ENCODE measurements at regions of chrX and their contacts with region 1.

Region 1: GRCh38 chrX:19360903-19361302 is 17.2 kb downstream of the PDHA1 start:
- DNase-seq: no peak
- ATAC-seq: no peak
- H3K4me3 Mint-ChIP-seq: no peak overlapping the region
- H3K27ac Mint-ChIP-seq: no peak overlapping the region
- H3K4me1 Mint-ChIP-seq: no peaks in the 10 kb centered on the region
- H3K27me3 Mint-ChIP-seq: no peaks in the 10 kb centered on the region

Region 2: DNA sequence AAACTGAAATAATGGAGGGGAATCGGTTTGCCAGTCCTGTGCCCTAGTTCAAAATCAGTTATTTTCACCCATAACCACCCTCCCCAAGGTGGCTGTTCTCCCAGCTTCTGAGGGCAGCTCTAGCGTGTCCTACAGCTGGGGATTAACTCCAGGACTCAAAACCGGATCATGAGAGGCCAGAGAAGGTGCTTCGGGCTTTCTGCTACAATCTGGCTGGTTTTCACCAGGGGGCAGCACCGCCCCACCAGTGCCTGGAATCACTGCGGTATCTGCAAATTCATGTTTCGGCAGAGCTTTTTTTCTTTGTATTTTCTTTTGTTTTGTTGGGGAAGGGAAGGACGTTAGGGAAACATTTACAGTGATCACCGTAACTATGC is 11.3 kb after region 1 on chrX:
- CTCF ChIA-PET with region 1: interaction called, 13 read pairs
- POLR2A ChIA-PET with region 1: no interaction called
- DNase-seq: peak; percentile 76
- ATAC-seq: peak; percentile 86
- H3K4me3 Mint-ChIP-seq: peak overlapping the region; percentile 70
- H3K27ac Mint-ChIP-seq: peak overlapping the region; percentile 34
- H3K4me1 Mint-ChIP-seq: peaks cover 8% of the 10 kb centered on the region
- H3K27me3 Mint-ChIP-seq: no peaks in the 10 kb centered on the region

Region 3: DNA sequence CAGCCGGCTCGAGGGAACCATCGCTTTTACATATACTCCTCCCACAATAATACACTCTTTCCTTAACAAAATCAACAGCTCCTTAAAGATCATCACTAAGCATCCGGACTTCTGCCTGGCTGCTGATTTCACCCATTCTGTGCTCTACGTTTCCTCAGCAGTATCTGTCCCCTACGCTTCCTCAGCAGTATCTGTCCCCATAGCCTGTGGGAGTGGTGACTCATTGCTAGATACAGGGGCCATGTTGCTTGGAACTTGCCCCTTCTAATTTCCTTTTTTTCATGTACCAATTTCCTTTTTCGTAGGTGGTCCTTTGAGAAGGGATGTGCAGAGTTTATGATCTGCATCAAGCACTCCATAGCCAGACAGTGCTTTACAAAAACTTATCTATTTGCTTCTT is 135.8 kb after region 1 on chrX:
- CTCF ChIA-PET with region 1: no interaction called
- POLR2A ChIA-PET with region 1: no interaction called
- DNase-seq: no peak
- ATAC-seq: no peak
- H3K4me3 Mint-ChIP-seq: no peak overlapping the region
- H3K27ac Mint-ChIP-seq: no peak overlapping the region
- H3K4me1 Mint-ChIP-seq: no peaks in the 10 kb centered on the region
- H3K27me3 Mint-ChIP-seq: peaks cover 7% of the 10 kb centered on the region

Region 4: GRCh38 chrX:19887911-19888879 is 527.3 kb after region 1 on chrX:
- CTCF ChIA-PET with region 1: no interaction called
- POLR2A ChIA-PET with region 1: no interaction called
- DNase-seq: peak; percentile 54
- ATAC-seq: peak; percentile 35
- H3K4me3 Mint-ChIP-seq: peak overlapping the region; percentile 75
- H3K27ac Mint-ChIP-seq: peak overlapping the region; percentile 79
- H3K4me1 Mint-ChIP-seq: peaks cover 54% of the 10 kb centered on the region
- H3K27me3 Mint-ChIP-seq: no peaks in the 10 kb centered on the region